ENCODE measurements at regions of chr6 and their contacts with region 1.

Region 1: DNA sequence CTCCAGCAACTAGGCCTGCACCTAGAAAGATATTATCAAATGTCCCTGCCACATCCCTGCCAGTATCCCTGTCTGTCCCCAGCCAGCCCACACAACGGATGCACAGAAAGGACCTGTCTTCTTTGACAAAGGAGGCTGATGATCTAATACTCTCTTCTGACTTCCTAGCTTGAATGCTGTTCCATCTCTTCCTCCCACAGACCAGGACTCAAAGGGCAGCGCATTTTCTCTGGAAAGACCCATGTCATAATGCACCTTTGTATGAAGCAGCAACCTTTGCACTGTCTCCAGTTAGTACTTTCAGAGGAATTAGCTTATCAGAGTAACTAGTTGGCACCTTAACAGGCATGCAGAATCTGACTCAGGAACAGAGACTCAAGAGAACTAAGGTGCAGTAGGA is 53.3 kb upstream of the TAF8 start:
- DNase-seq: no peak
- ATAC-seq: no peak
- H3K4me3 ChIP-seq: no peak overlapping the region
- H3K4me3 Mint-ChIP-seq: no peak overlapping the region
- H3K27ac ChIP-seq: peak overlapping the region; percentile 3
- H3K27ac Mint-ChIP-seq: peak overlapping the region; percentile 53 to 56
- H3K4me1 ChIP-seq: peaks cover 0 to 30% of the 10 kb centered on the region in 2 experiments
- H3K4me1 Mint-ChIP-seq: peaks cover 43 to 56% (median 50%) of the 10 kb centered on the region in 3 donors
- H3K27me3 ChIP-seq: no peaks in the 10 kb centered on the region
- H3K27me3 Mint-ChIP-seq: no peaks in the 10 kb centered on the region

Region 2: GRCh38 chr6:41836022-41836659 is 160.9 kb before region 1 on chr6:
- CTCF ChIA-PET with region 1: no interaction called
- POLR2A ChIA-PET with region 1: interaction called in 1 of 2 experiments, 16 read pairs
- DNase-seq: no peak
- ATAC-seq: peak in 1 of 4 experiments; percentile 31
- H3K4me3 ChIP-seq: no peak overlapping the region
- H3K4me3 Mint-ChIP-seq: no peak overlapping the region
- H3K27ac ChIP-seq: no peak overlapping the region
- H3K27ac Mint-ChIP-seq: no peak overlapping the region
- H3K4me1 ChIP-seq: no peaks in the 10 kb centered on the region
- H3K4me1 Mint-ChIP-seq: peaks cover 3 to 13% (median 3%) of the 10 kb centered on the region in 3 donors
- H3K27me3 ChIP-seq: no peaks in the 10 kb centered on the region
- H3K27me3 Mint-ChIP-seq: no peaks in the 10 kb centered on the region

Region 3: GRCh38 chr6:42009966-42010891 is 13.2 kb after region 1 on chr6:
- CTCF ChIA-PET with region 1: interaction called in 1 of 2 experiments, 3 read pairs
- POLR2A ChIA-PET with region 1: interaction called, 3 to 11 read pairs
- DNase-seq: peak in 4 of 35 experiments; percentile 10 to 35 (median 26)
- ATAC-seq: peak; percentile 40 to 58 (median 54)
- H3K4me3 ChIP-seq: peak overlapping the region in 1 of 2 donors; percentile 15
- H3K4me3 Mint-ChIP-seq: peak overlapping the region; percentile 41 to 76 (median 59)
- H3K27ac ChIP-seq: peak overlapping the region; percentile 45
- H3K27ac Mint-ChIP-seq: peak overlapping the region; percentile 89 to 92
- H3K4me1 ChIP-seq: peaks cover 42 to 73% of the 10 kb centered on the region in 2 experiments
- H3K4me1 Mint-ChIP-seq: peaks cover 80 to 85% (median 82%) of the 10 kb centered on the region in 3 donors
- H3K27me3 ChIP-seq: no peaks in the 10 kb centered on the region
- H3K27me3 Mint-ChIP-seq: no peaks in the 10 kb centered on the region